ENCODE measurements at regions of chr12 and their contacts with region 1.

Region 1: DNA sequence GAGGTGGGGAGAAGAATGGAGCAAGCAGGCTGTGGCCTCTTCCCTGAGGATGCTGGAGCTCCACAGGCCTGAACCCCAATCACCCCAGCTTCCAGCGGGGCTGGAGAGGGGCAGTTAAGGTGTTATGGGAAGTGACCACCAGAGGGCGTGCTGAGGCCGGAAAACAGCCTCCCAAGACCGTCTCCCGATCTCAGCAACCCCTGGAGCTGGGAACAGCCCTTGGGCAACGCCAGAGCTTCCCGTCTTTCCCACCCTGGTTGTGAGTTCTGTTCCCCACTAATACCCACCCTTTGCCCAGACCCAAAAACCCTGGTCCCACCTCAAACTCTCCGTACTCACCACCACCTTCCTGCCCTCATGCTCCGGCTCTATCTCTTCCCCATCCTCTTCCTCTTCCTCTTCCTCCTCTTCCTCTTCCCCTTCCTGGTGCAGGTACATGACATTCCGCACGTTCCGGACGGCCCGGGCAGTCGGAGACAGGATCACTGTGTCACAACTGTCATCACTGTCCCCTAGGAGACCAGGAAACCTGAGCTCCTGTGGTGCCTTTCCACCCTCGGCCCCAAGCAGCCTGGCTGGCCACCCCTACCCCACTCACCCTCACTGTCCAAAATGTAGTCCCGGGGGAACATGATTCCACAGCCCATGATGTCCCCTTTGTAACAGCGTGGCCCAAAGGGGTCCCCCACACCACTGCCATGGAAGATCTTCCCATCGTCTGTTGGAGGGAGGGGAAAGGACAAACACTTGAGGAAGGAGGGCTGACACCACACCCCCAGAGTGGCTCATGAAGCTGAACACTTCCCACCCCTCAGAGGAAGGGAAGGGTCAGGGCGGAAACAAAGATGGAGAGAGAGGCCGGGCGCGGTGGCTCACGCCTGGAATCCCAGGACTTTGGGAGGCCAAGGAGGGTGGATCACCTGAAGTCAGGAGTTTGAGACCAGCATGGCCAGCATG is 12.9 kb downstream of the SPRYD3 start:
- DNase-seq: peak; percentile 76
- H3K4me3 Mint-ChIP-seq: no peak overlapping the region
- H3K27ac Mint-ChIP-seq: no peak overlapping the region
- H3K4me1 Mint-ChIP-seq: peaks cover 8% of the 10 kb centered on the region
- H3K27me3 Mint-ChIP-seq: no peaks in the 10 kb centered on the region

Region 2: GRCh38 chr12:52992699-52993557 is 73.3 kb before region 1 on chr12:
- CTCF ChIA-PET with region 1: no interaction called
- POLR2A ChIA-PET with region 1: no interaction called
- intact Hi-C with region 1: no loop called
- DNase-seq: no peak
- H3K4me3 Mint-ChIP-seq: no peak overlapping the region
- H3K27ac Mint-ChIP-seq: no peak overlapping the region
- H3K4me1 Mint-ChIP-seq: no peaks in the 10 kb centered on the region
- H3K27me3 Mint-ChIP-seq: no peaks in the 10 kb centered on the region

Region 3: GRCh38 chr12:53054112-53054833 is 12.0 kb before region 1 on chr12:
- CTCF ChIA-PET with region 1: interaction called, 39 read pairs
- POLR2A ChIA-PET with region 1: interaction called, 5 read pairs
- intact Hi-C with region 1: no loop called
- DNase-seq: peak; percentile 95
- H3K4me3 Mint-ChIP-seq: peak overlapping the region; percentile 95
- H3K27ac Mint-ChIP-seq: peak overlapping the region; percentile 85
- H3K4me1 Mint-ChIP-seq: peaks cover 8% of the 10 kb centered on the region
- H3K27me3 Mint-ChIP-seq: no peaks in the 10 kb centered on the region

Region 4: DNA sequence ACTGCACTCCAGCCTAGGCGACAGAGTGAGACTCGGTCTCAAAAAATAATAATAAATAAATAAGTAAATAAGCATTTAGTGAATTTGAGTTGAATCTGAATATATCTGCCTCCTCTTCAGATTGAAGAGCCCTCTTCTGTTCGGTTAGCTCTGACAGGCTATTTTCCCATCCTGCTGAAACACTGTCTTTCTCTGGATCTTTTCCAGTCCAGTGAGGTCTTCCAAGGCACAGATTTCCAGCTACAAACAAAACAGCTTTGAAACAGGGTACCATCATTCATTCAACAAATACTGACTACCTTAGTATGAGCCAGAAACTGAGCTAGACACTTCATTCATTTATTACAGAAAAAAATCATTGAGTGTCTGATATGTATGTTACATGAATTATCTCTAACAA is 20.1 kb after region 1 on chr12:
- CTCF ChIA-PET with region 1: interaction called, 122 read pairs
- POLR2A ChIA-PET with region 1: no interaction called
- intact Hi-C with region 1: no loop called
- DNase-seq: no peak
- H3K4me3 Mint-ChIP-seq: no peak overlapping the region
- H3K27ac Mint-ChIP-seq: no peak overlapping the region
- H3K4me1 Mint-ChIP-seq: peaks cover 7% of the 10 kb centered on the region
- H3K27me3 Mint-ChIP-seq: peaks cover 3% of the 10 kb centered on the region

Region 5: DNA sequence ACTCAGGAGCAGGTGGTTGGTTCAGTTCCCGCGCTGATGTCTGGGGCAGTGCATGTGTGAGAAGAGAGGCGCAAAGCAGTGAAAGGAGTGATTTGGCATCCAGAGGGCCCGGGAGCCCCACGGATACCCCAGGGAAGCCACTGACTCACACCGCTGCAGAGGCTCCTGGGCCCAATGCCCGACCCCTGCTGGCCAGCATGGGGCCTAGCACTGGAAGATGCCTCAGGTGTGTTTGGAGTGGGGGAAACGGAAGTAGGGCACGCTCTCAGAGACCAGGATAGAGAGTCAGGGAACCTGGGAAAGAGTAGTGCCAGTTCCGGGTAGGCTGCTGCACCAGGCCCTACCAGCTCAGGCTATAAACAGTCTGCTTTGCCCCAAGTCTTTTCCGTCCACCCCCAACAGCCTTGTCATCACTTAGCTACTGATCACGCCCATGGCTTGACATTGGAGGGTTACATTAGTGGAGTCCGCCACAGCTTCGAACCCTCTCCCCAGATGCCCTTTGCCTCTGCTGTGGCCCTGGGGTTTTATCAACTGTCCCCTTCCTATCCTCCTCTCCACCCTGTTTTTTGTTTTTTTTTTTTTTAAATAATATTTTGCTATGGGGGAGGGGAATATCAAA is 124.0 kb after region 1 on chr12:
- CTCF ChIA-PET with region 1: interaction called, 6 read pairs
- POLR2A ChIA-PET with region 1: no interaction called
- intact Hi-C with region 1: loop called (anchors 1 kb)
- DNase-seq: peak; percentile 62
- H3K4me3 Mint-ChIP-seq: no peak overlapping the region
- H3K27ac Mint-ChIP-seq: peak overlapping the region; percentile 72
- H3K4me1 Mint-ChIP-seq: peaks cover 6% of the 10 kb centered on the region
- H3K27me3 Mint-ChIP-seq: no peaks in the 10 kb centered on the region

Region 6: GRCh38 chr12:53344824-53345485 is 278.7 kb after region 1 on chr12:
- CTCF ChIA-PET with region 1: interaction called, 23 read pairs
- POLR2A ChIA-PET with region 1: no interaction called
- intact Hi-C with region 1: no loop called
- DNase-seq: peak; percentile 86
- H3K4me3 Mint-ChIP-seq: peak overlapping the region; percentile 92
- H3K27ac Mint-ChIP-seq: peak overlapping the region; percentile 56
- H3K4me1 Mint-ChIP-seq: peaks cover 14% of the 10 kb centered on the region
- H3K27me3 Mint-ChIP-seq: no peaks in the 10 kb centered on the region

Region 7: GRCh38 chr12:53474819-53475218 is 408.6 kb after region 1 on chr12:
- CTCF ChIA-PET with region 1: no interaction called
- POLR2A ChIA-PET with region 1: no interaction called
- intact Hi-C with region 1: no loop called
- DNase-seq: no peak
- H3K4me3 Mint-ChIP-seq: peak overlapping the region; percentile 45
- H3K27ac Mint-ChIP-seq: peak overlapping the region; percentile 94
- H3K4me1 Mint-ChIP-seq: peaks cover 69% of the 10 kb centered on the region
- H3K27me3 Mint-ChIP-seq: no peaks in the 10 kb centered on the region

Measured in activated CD4-positive, alpha-beta memory T cell treated with anti-CD3 and anti-CD28 coated beads for 36 hours (primary cell).